ENCODE measurements at regions of chr12 and their contacts with region 1.

Region 1: GRCh38 chr12:98373025-98373554 is 142.3 kb upstream of the TMPO start:
- DNase-seq: peak; percentile 73
- H3K4me3 ChIP-seq: no peak overlapping the region
- H3K27ac ChIP-seq: no peak overlapping the region
- H3K4me1 ChIP-seq: peaks cover 21% of the 10 kb centered on the region
- CTCF ChIP-seq: peak; percentile 95

Region 2: DNA sequence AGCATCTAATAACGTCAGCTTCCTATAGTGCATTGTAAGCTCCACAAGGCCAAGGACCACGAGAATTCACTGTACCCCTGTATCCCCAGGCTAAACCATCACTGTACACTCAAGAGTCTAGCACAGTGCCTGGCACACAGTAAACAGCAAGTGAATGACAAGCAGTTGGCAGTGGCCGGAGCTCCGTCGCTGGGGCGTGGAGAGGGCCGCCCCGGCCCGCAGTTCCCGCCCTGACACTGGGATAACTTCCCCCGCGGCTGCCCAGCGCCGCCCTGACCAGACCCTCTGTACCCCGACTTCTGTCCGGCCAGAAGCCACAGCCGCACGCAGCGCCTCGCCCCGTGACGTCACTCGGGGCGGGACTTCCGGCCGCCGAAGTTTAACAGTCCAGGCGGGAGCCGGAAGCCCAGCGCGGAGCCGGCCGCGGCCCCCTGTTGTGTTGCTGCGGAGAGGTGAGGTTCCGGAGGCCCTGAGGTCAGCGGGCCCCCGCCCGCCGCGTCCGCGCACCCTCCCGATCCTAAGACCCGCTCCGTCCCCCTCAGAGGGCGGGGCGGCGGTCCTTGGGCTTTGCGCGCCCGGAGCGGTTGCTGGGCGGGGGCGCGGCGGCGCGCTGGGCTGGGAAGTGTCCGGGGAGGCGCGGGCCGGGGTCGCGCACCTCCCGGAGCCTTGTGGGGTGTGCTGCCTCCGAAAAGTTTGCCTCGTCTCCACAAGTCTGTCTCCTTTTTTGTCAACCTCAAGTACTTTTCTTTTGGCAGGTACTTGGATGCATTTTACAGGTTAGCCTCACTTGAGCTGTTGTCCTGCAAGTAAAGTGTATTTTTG is 1466.0 kb before region 1 on chr12 and contains the start of gene NEDD1:
- CTCF ChIA-PET with region 1: no interaction called
- POLR2A ChIA-PET with region 1: no interaction called
- intact Hi-C with region 1: loop called (anchors 10 kb)
- DNase-seq: peak; percentile 88
- H3K4me3 ChIP-seq: peak within 1 kb of the TSS; percentile 95
- H3K27ac ChIP-seq: peak within 1 kb of the TSS; percentile 51
- H3K4me1 ChIP-seq: peaks cover 42% of the 10 kb centered on the region
- CTCF ChIP-seq: no peak
- total RNA-seq, gene NEDD1: 30.7 and 39.2 TPM in 2 replicates

Region 3: GRCh38 chr12:97716356-97716755 is 656.7 kb before region 1 on chr12:
- CTCF ChIA-PET with region 1: no interaction called
- POLR2A ChIA-PET with region 1: interaction called, 3 read pairs
- intact Hi-C with region 1: loop called (anchors 2 kb)
- DNase-seq: peak; percentile 8
- H3K4me3 ChIP-seq: no peak overlapping the region
- H3K27ac ChIP-seq: no peak overlapping the region
- H3K4me1 ChIP-seq: no peaks in the 10 kb centered on the region
- CTCF ChIP-seq: peak; percentile 56

Region 4: GRCh38 chr12:98002712-98003493 is 370.2 kb before region 1 on chr12:
- CTCF ChIA-PET with region 1: no interaction called
- POLR2A ChIA-PET with region 1: no interaction called
- intact Hi-C with region 1: loop called (anchors 5 kb)
- DNase-seq: peak; percentile 56
- H3K4me3 ChIP-seq: no peak overlapping the region
- H3K27ac ChIP-seq: no peak overlapping the region
- H3K4me1 ChIP-seq: no peaks in the 10 kb centered on the region
- CTCF ChIP-seq: peak; percentile 75

Region 5: DNA sequence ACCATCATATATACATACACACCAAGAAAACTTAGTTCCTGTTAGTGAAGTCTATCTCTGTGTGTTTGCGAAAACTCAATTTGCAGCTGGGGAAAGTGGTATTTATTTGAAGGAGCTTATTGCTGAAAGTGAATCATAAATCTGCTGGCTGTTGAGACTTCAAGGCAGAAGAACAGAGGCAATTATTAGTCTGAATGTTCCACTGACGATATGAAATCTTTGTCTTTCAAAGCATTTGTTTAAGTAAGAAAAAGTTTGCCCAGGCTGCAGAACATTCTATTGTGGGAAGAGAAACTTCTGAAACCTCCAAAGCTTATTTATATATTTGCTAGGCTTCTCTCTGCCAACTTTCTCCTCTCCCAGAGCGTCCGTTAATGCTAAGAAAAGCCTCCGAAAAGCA is 113.4 kb before region 1 on chr12:
- CTCF ChIA-PET with region 1: no interaction called
- POLR2A ChIA-PET with region 1: no interaction called
- intact Hi-C with region 1: loop called (anchors 2 kb)
- DNase-seq: peak; percentile 80
- H3K4me3 ChIP-seq: peak overlapping the region; percentile 52
- H3K27ac ChIP-seq: peak overlapping the region; percentile 93
- H3K4me1 ChIP-seq: peaks cover 90% of the 10 kb centered on the region
- CTCF ChIP-seq: no peak